Activated CD4-positive, alpha-beta memory T cell treated with anti-CD3 and anti-CD28 coated beads for 36 hours (primary cell): ENCODE measurements at regions of chr5 and their contacts with region 1.

Region 1: DNA sequence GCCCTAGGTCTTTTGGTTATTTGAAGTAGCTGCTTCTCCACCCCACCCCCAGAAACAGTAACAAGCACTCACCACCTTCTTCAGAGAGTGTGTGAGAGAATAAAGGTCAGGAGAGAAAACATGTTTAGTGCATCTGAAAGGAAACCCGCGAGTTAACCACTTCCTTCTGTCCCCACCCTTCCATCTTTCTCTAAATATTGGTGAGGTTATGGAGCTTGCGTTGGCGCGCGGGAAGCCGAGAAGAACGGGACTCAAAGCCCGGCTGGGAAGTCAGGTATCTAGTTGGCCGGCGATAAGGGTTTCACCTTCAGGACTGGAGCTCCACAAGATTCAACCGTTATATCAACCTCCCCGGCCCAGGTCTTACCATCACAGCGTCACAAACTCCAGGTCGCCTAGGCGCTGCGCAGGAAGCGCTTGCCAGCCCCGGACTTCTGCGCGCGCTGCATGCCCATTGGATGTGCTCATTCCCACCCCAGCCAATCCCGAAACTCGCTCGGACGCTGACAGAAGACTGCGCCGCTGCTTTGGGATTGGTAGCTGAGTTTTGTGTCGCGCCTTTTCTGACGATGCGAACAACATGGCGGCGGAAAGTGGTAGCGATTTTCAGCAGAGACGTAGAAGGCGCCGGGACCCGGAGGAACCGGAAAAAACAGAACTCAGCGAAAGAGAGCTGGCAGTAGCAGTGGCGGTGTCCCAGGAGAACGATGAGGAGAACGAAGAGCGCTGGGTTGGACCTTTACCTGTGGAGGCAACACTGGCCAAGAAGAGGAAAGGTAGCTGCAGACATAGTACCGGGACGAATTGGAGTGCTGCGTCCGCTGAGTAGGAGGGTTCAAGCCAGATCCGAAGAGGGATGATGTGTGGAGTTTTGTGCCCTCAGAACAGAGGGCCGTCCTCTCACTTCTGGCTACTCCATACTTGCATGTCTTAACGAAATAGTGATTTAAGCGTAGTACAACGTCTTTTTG is at the starts of genes CENPK and PPWD1:
- DNase-seq: peak; percentile 98
- H3K4me3 Mint-ChIP-seq: peak within 1 kb of the TSS; percentile 92
- H3K27ac Mint-ChIP-seq: peak within 1 kb of the TSS; percentile 93
- H3K4me1 Mint-ChIP-seq: peaks cover 45% of the 10 kb centered on the region
- H3K27me3 Mint-ChIP-seq: no peaks in the 10 kb centered on the region
- total RNA-seq, gene CENPK: 79.7 to 87.5 TPM
- total RNA-seq, gene PPWD1: 38.0 to 42.2 TPM

Region 2: DNA sequence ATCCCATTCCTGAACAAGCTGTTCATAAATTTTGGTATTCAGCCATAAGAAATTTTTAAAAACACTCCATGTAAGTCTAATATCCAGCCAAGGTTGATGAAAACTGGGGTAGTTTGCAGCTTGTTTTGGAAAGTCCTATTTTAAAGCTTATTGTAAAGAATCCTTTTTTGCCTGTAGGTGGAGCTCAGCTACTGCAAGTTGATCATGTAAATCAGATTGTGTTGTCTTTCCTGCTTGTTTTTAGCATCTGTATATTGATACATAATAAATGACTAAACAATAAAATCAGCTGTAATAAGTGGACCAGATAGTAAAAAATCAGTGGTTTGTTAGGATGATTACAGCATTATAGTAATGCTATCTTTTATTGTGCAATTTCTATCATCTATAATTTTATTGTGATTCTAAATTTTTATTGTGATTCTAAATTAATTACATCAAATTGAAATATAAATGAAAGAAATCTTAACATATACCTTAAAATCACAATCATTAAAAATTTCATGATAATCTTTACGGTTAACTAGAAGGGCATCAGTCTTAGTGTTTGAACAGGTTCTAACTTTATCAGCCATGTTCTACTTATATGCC is 751.9 kb before region 1 on chr5:
- CTCF ChIA-PET with region 1: interaction called, 12 read pairs
- POLR2A ChIA-PET with region 1: no interaction called
- intact Hi-C with region 1: no loop called
- DNase-seq: no peak
- H3K4me3 Mint-ChIP-seq: no peak overlapping the region
- H3K27ac Mint-ChIP-seq: no peak overlapping the region
- H3K4me1 Mint-ChIP-seq: peaks cover 6% of the 10 kb centered on the region
- H3K27me3 Mint-ChIP-seq: no peaks in the 10 kb centered on the region

Region 3: GRCh38 chr5:65588694-65589093 is 25.7 kb after region 1 on chr5:
- CTCF ChIA-PET with region 1: no interaction called
- POLR2A ChIA-PET with region 1: no interaction called
- intact Hi-C with region 1: no loop called
- DNase-seq: no peak
- H3K4me3 Mint-ChIP-seq: no peak overlapping the region
- H3K27ac Mint-ChIP-seq: no peak overlapping the region
- H3K4me1 Mint-ChIP-seq: no peaks in the 10 kb centered on the region
- H3K27me3 Mint-ChIP-seq: no peaks in the 10 kb centered on the region

Region 4: DNA sequence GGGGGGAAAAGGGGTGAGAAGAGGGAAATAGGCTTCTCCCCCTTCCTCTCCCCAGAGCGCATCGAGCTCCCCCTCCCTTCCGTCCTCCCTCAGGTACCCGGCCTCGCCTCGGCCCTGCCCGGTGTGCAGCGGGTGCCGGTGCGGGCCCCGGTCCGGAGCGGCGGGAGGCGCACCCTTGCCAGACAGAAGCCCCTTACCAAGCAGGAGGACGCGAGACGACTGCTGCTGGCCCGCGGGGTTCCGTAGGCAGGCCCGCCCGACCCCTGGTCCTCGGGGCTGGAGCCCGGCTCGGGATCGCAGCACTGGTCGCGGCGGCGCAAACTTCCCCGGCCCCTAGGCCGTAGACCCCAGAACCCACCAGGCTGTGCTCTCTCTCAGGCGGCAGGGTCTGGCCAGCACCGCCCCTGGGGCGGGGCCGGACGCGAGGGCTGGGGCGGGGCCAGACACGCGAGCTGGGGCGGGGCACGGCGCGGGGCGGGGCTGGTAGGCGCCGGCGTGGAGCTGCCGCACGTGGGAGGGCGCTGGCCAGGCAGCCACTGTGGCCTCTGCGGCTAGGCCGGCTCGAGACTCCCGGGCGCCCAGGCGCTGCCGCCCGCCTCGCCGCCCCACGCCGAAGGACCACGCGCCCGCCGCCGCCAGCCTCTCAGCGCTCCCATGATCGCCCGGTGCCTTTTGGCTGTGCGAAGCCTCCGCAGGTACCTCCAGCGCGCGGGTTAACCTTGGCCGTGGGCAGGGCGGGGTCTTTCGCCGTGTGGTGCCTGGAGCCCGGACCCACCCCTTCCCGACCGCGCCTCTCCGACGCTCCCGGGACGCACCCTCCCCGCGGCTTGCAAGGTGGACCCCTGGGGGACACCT is 158.9 kb after region 1 on chr5 and contains the starts of genes NLN and SGTB:
- CTCF ChIA-PET with region 1: no interaction called
- POLR2A ChIA-PET with region 1: interaction called, 3 read pairs
- intact Hi-C with region 1: loop called (anchors 5 kb)
- DNase-seq: peak; percentile 88
- H3K4me3 Mint-ChIP-seq: peak within 1 kb of the TSS; percentile 89
- H3K27ac Mint-ChIP-seq: peak within 1 kb of the TSS; percentile 91
- H3K4me1 Mint-ChIP-seq: peaks cover 25% of the 10 kb centered on the region
- H3K27me3 Mint-ChIP-seq: no peaks in the 10 kb centered on the region
- total RNA-seq, gene NLN: 22.7 to 23.7 TPM
- total RNA-seq, gene SGTB: 16.5 to 16.7 TPM